ENCODE measurements at regions of chr5 and their contacts with region 1.

Region 1: GRCh38 chr5:32092938-32093812 is 80.9 kb downstream of the GOLPH3 start:
- DNase-seq: peak; percentile 54 to 58
- ATAC-seq: peak; percentile 72 to 90
- H3K4me3 ChIP-seq: no peak overlapping the region
- H3K27ac ChIP-seq: no peak overlapping the region
- H3K4me1 ChIP-seq: peaks cover 15 to 17% of the 10 kb centered on the region in 2 donors
- H3K27me3 ChIP-seq: no peaks in the 10 kb centered on the region
- CTCF ChIP-seq: peak; percentile 64 to 77 (median 76)
- POLR2A ChIP-seq: no peak

Region 2: GRCh38 chr5:31531888-31532710 is 561.1 kb before region 1 on chr5 and contains the starts of genes C5orf22 and DROSHA:
- in situ Hi-C with region 1: no loop called
- intact Hi-C with region 1: loop called (anchors 5 kb)
- DNase-seq: peak; percentile 95
- ATAC-seq: peak; percentile 99 to 100
- H3K4me3 ChIP-seq: peak within 1 kb of the TSS; percentile 76 to 97 (median 86)
- H3K27ac ChIP-seq: peak within 1 kb of the TSS; percentile 66 to 92 (median 90)
- H3K4me1 ChIP-seq: peaks cover 21 to 34% of the 10 kb centered on the region in 2 donors
- H3K27me3 ChIP-seq: no peaks in the 10 kb centered on the region
- CTCF ChIP-seq: peak in 2 of 5 experiments; percentile 12
- POLR2A ChIP-seq: peak; percentile 64 to 76
- total RNA-seq, gene C5orf22: 24.1 to 27.0 (median 25.2) TPM
- total RNA-seq, gene DROSHA: 9.2 to 28.8 (median 28.4) TPM

Region 3: DNA sequence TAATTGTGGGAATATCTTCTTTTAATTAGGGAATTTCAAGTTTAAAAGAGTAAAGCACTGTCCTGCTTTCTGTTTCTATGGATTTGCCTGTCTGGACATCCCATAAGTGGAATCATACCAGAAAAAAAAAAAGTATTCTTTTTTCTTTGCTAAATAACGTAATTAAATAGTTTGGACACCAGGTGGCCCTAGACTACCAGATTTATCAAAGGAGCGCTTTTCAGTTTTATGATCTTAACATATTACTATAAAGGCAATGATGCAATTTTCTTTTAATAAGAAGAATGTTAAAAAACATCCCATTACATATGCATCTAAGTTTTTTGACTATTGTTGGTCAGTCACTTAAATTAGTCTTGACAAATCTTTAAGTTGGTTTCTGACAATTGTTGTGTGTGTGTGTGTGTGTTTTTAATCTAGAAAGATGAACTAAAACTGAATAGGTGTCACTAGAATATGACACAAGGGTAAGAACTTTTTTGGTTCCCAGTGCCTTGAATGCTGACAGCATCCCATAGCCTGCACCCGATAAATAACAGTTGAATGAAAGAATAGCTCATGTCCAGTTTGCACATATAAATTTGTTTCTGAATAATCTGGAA is 511.6 kb before region 1 on chr5:
- in situ Hi-C with region 1: loop called in 3 of 4 experiments (anchors 10 to 25 kb)
- intact Hi-C with region 1: loop called (anchors 1 kb)
- DNase-seq: no peak
- ATAC-seq: no peak
- H3K4me3 ChIP-seq: no peak overlapping the region
- H3K27ac ChIP-seq: no peak overlapping the region
- H3K4me1 ChIP-seq: no peaks in the 10 kb centered on the region
- H3K27me3 ChIP-seq: peaks cover 0 to 4% (median 0%) of the 10 kb centered on the region in 3 donors
- CTCF ChIP-seq: peak; percentile 22 to 57 (median 35)
- POLR2A ChIP-seq: no peak

Region 4: GRCh38 chr5:31825518-31826068 is 267.6 kb before region 1 on chr5:
- in situ Hi-C with region 1: loop called in 3 of 4 experiments (anchors 5 to 10 kb)
- intact Hi-C with region 1: loop called (anchors 1 kb)
- DNase-seq: no peak
- ATAC-seq: peak; percentile 74 to 75
- H3K4me3 ChIP-seq: no peak overlapping the region
- H3K27ac ChIP-seq: no peak overlapping the region
- H3K4me1 ChIP-seq: no peaks in the 10 kb centered on the region
- H3K27me3 ChIP-seq: no peaks in the 10 kb centered on the region
- CTCF ChIP-seq: peak; percentile 45 to 69 (median 56)
- POLR2A ChIP-seq: no peak

Measured in gastrocnemius medialis (tissue), 4 donors.